ENCODE measurements at regions of chr4 and their contacts with region 1.

Region 1: DNA sequence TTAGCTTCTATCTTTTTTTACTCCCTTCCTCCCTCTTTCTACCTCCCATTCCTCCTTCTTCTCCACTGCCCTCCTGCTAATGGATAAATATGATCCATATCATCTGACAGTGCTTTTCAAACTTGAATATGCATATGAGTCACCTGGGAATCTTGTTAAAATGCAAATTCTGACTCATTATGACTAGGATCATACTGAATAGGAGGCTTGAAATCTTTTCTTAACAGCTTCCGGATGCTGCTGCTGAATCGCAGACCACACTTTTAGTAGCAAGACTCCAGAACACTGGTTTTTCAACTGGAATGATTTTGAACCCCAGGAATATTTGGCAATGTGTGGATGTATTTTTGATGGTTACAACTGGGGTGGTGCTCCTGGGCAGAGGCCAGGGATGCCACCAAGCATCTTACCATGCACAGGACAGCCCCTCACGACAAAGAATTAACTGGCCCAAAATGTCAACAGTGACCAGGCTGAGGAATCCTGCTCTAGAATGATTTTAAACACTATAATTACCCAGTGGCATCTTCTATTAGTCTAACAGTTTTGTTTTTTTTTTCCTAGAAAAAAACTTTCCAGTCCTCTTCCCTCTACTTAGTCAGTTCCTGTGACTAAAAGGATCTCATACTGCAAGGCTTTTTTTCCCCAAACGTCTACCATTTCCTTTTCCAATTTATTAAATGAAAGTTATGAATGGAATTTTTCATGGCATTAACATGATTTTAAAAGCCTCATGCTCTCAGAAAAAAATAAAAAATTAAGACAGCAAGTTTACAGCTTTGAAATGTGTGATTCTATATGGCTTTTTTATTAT is 10.6 kb upstream of the PYURF start:
- DNase-seq: no peak
- H3K4me3 Mint-ChIP-seq: no peak overlapping the region
- H3K27ac Mint-ChIP-seq: no peak overlapping the region
- H3K4me1 Mint-ChIP-seq: no peaks in the 10 kb centered on the region
- H3K27me3 Mint-ChIP-seq: peaks cover 2% of the 10 kb centered on the region

Region 2: DNA sequence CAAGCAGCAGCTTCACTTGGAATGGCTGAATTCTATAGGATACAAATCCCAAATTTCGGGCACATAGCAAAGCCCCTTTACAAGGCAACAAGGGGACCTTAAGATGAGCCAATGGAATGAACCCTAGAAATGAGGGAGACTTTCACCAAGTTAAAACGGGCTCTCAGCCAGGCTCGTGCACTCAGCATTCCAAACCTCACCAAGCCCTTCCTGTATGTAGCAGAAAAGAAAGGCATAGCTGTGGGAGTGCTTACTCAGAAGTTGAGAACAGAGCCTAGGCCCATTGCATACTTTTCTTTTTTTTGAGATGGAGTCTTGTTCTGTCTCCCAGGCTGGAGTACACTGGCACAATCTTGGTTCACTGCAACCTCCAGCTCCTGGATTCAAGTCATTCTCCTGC is 88.0 kb before region 1 on chr4:
- CTCF ChIA-PET with region 1: no interaction called
- POLR2A ChIA-PET with region 1: no interaction called
- DNase-seq: no peak
- H3K4me3 Mint-ChIP-seq: no peak overlapping the region
- H3K27ac Mint-ChIP-seq: no peak overlapping the region
- H3K4me1 Mint-ChIP-seq: peaks cover 4% of the 10 kb centered on the region
- H3K27me3 Mint-ChIP-seq: no peaks in the 10 kb centered on the region

Region 3: DNA sequence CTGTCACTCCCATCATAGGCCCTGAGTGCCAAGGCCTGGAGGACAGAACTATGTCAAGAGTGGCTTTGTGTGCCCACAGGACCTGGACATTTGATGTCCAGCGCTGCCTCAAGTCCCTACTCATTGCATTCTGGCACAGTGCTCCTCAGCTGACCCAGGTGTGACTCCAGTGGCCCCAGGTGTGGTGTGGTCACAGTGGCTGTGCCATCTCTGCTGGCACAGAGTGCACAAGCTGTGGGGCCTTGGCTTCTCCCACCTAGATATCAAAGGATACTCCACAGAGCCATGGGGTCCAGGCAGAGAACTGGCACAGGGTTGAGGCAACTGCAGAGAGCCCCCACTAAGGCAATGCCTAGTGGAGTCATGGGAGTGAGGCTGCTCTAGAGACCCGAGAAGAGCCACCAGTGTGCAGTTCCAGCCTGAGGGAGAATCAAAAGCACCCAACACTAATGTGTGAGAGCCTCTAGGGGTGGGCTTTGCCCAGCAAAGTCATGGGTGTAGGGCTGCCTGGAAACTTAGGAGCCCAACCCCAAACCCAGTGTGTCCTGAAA is 36.2 kb before region 1 on chr4:
- CTCF ChIA-PET with region 1: no interaction called
- POLR2A ChIA-PET with region 1: no interaction called
- DNase-seq: no peak
- H3K4me3 Mint-ChIP-seq: no peak overlapping the region
- H3K27ac Mint-ChIP-seq: no peak overlapping the region
- H3K4me1 Mint-ChIP-seq: peaks cover 10% of the 10 kb centered on the region
- H3K27me3 Mint-ChIP-seq: no peaks in the 10 kb centered on the region

Region 4: GRCh38 chr4:88659055-88659889 is 125.1 kb after region 1 on chr4:
- CTCF ChIA-PET with region 1: interaction called, 10 read pairs
- POLR2A ChIA-PET with region 1: no interaction called
- DNase-seq: peak; percentile 48
- H3K4me3 Mint-ChIP-seq: no peak overlapping the region
- H3K27ac Mint-ChIP-seq: no peak overlapping the region
- H3K4me1 Mint-ChIP-seq: peaks cover 13% of the 10 kb centered on the region
- H3K27me3 Mint-ChIP-seq: no peaks in the 10 kb centered on the region